Naive thymus-derived CD8-positive, alpha-beta T cell (primary cell): ENCODE measurements at regions of chr11 and their contacts with region 1.

Region 1: GRCh38 chr11:67401495-67402191 is at the start of gene PPP1CA:
- DNase-seq: peak; percentile 82 to 98 (median 93)
- ATAC-seq: peak; percentile 62 to 71
- H3K4me3 Mint-ChIP-seq: peak within 1 kb of the TSS; percentile 87 to 99 (median 97)
- H3K27ac Mint-ChIP-seq: peak within 1 kb of the TSS; percentile 85 to 96 (median 93)
- H3K4me1 Mint-ChIP-seq: peaks cover 18 to 79% (median 62%) of the 10 kb centered on the region in 4 donors
- H3K27me3 Mint-ChIP-seq: no peaks in the 10 kb centered on the region
- polyA plus RNA-seq, gene PPP1CA: 357 to 518 (median 403) TPM

Region 2: DNA sequence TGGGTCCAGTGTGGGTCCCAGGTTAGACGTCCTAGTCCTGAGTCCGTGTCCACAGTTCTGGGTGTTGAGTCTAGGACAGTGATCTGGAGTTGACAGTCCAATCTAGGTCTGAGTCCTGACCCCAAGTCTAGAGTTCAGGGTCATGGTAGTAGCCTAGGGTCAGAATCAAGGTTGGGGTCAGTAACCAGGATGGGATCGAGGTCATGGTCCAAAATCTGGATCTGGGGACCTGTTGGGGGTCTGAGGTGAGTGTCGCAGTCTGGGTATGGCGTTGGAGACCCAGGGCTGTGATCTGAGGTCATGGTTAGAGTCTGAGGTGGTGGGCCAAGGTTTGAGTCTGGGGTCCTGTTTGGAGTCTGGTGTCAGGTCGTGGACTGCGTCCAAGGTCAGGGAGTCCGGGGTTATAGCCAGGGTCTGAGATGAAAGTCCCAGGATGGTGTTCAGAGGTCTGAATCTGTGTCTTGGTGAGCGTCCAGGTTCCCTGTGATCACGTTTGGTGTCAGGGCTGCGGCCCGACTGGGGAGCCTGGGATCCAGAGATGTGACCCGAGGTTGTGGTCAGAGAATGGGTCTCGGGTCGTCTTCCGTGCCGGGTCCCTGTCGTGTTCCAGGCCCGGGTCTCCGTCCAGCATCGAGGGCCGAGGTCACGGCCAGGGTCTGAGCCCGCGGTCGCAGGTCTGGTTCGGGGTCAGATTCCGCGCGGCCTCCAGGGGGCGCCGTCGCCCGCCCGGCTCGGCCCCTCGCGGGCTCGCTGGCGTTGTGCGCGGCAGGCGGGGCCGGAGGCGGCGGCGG is 135.8 kb before region 1 on chr11:
- POLR2A ChIA-PET with region 1: interaction called, 15 read pairs
- DNase-seq: peak; percentile 57 to 84 (median 79)
- ATAC-seq: peak; percentile 43 to 49
- H3K4me3 Mint-ChIP-seq: peak overlapping the region; percentile 74 to 98 (median 81)
- H3K27ac Mint-ChIP-seq: peak overlapping the region; percentile 70 to 90 (median 88)
- H3K4me1 Mint-ChIP-seq: peaks cover 36 to 67% (median 65%) of the 10 kb centered on the region in 4 donors
- H3K27me3 Mint-ChIP-seq: no peaks in the 10 kb centered on the region

Region 3: GRCh38 chr11:67277231-67277961 is 124.2 kb before region 1 on chr11:
- POLR2A ChIA-PET with region 1: interaction called, 15 read pairs
- DNase-seq: peak; percentile 84 to 95 (median 90)
- ATAC-seq: peak; percentile 89 to 96
- H3K4me3 Mint-ChIP-seq: peak overlapping the region; percentile 74 to 98 (median 86)
- H3K27ac Mint-ChIP-seq: peak overlapping the region; percentile 90 to 100 (median 98)
- H3K4me1 Mint-ChIP-seq: peaks cover 28 to 83% (median 78%) of the 10 kb centered on the region in 4 donors
- H3K27me3 Mint-ChIP-seq: no peaks in the 10 kb centered on the region

Region 4: GRCh38 chr11:67391304-67392132 is 10.1 kb before region 1 on chr11 and contains the start of gene RAD9A:
- POLR2A ChIA-PET with region 1: interaction called, 139 read pairs
- DNase-seq: peak; percentile 85 to 95 (median 90)
- ATAC-seq: peak; percentile 81 to 84
- H3K4me3 Mint-ChIP-seq: peak within 1 kb of the TSS; percentile 81 to 90 (median 87)
- H3K27ac Mint-ChIP-seq: peak within 1 kb of the TSS; percentile 68 to 93 (median 88)
- H3K4me1 Mint-ChIP-seq: peaks cover 30 to 47% (median 43%) of the 10 kb centered on the region in 4 donors
- H3K27me3 Mint-ChIP-seq: no peaks in the 10 kb centered on the region
- polyA plus RNA-seq, gene RAD9A: 6.5 to 9.4 (median 6.6) TPM

Region 5: GRCh38 chr11:67428052-67428914 is 26.6 kb after region 1 on chr11 and contains the start of gene RPS6KB2:
- POLR2A ChIA-PET with region 1: interaction called, 2,390 read pairs
- DNase-seq: peak; percentile 94 to 100 (median 99)
- ATAC-seq: peak; percentile 88 to 89
- H3K4me3 Mint-ChIP-seq: peak within 1 kb of the TSS; percentile 92 to 99 (median 98)
- H3K27ac Mint-ChIP-seq: peak within 1 kb of the TSS; percentile 91 to 98 (median 96)
- H3K4me1 Mint-ChIP-seq: peaks cover 14 to 61% (median 44%) of the 10 kb centered on the region in 4 donors
- H3K27me3 Mint-ChIP-seq: no peaks in the 10 kb centered on the region
- polyA plus RNA-seq, gene RPS6KB2: 41.9 to 45.9 (median 43.2) TPM

Region 6: DNA sequence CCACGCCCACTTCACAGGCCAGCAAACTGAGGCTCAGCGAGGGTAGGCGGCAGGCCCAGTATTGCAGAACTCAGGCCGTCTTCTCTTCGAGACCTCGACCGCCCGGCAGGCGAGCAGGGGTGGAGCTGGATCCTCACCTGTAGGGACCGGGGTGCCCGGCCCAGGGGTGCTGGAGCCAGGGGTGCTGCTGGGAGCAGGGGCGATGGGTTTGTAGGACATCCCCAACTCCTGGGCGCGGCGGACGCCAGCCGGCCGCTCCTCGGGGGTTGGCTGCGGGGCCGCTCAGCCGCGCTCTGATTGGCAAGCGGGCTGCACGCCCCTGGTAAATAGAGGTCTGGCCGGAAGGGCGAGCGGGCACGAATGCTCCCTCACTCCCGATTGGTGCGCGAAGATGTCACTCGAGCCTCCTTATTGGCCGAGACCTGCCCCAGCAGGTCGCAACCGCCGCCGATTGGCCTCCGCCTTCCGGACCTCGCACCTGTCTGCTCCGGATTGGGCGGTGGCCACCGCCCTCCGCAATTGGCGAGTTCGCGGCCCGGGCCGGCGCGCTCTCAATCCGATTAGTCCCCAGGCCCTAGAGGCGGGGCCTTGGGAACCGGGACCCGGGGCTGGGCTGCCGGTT is 106.3 kb after region 1 on chr11 and contains the start of gene CDK2AP2:
- POLR2A ChIA-PET with region 1: interaction called, 18 read pairs
- DNase-seq: peak in 9 of 10 donors; percentile 92 to 99 (median 96)
- ATAC-seq: peak; percentile 74
- H3K4me3 Mint-ChIP-seq: peak within 1 kb of the TSS; percentile 81 to 94 (median 92)
- H3K27ac Mint-ChIP-seq: peak within 1 kb of the TSS; percentile 83 to 99 (median 97)
- H3K4me1 Mint-ChIP-seq: peaks cover 26 to 47% (median 39%) of the 10 kb centered on the region in 4 donors
- H3K27me3 Mint-ChIP-seq: peaks cover 0 to 5% (median under 1%) of the 10 kb centered on the region in 5 donors
- polyA plus RNA-seq, gene CDK2AP2: 75.9 to 96.8 (median 79.5) TPM